ENCODE measurements at regions of chr19 and their contacts with region 1.

Region 1: GRCh38 chr19:53867225-53868090 is at the start of gene MYADM:
- DNase-seq: peak; percentile 95
- ATAC-seq: peak; percentile 70
- H3K4me3 ChIP-seq: peak within 1 kb of the TSS; percentile 95 to 96
- H3K27ac ChIP-seq: peak within 1 kb of the TSS; percentile 96
- H3K4me1 ChIP-seq: peaks cover 39% of the 10 kb centered on the region
- H3K27me3 ChIP-seq: no peaks in the 10 kb centered on the region
- CTCF ChIP-seq: no peak
- total RNA-seq, gene MYADM: 469 TPM

Region 2: DNA sequence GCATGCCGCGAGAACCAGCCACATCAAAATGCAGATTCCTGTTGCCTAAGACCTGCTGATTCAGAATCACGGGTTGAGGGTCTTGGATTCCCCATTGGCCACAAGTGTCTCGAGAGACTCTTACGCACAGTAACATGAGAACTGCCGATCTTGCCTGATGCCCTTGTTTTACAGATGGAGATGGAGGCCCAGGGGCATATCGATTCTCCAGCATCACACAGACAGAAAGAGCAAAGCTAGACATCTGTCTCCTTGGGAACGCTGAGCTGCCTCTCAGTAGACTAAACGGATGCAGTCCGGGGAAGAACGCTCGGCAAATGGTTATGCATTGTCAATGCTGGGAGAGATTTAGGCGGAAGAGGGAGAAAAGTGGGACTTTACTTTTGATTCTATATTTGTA is 48.7 kb before region 1 on chr19:
- CTCF ChIA-PET with region 1: no interaction called
- POLR2A ChIA-PET with region 1: no interaction called
- in situ Hi-C with region 1: no loop called
- intact Hi-C with region 1: no loop called
- DNase-seq: no peak
- ATAC-seq: no peak
- H3K4me3 ChIP-seq: no peak overlapping the region
- H3K27ac ChIP-seq: no peak overlapping the region
- H3K4me1 ChIP-seq: no peaks in the 10 kb centered on the region
- H3K27me3 ChIP-seq: no peaks in the 10 kb centered on the region
- CTCF ChIP-seq: no peak

Region 3: GRCh38 chr19:53881482-53882390 is 14.3 kb after region 1 on chr19 and contains the start of gene PRKCG:
- CTCF ChIA-PET with region 1: no interaction called
- POLR2A ChIA-PET with region 1: interaction called, 20 read pairs
- in situ Hi-C with region 1: no loop called
- intact Hi-C with region 1: no loop called
- DNase-seq: no peak
- ATAC-seq: peak; percentile 46
- H3K4me3 ChIP-seq: peak within 1 kb of the TSS; percentile 51 to 73
- H3K27ac ChIP-seq: peak within 1 kb of the TSS; percentile 78
- H3K4me1 ChIP-seq: peaks cover 31% of the 10 kb centered on the region
- H3K27me3 ChIP-seq: no peaks in the 10 kb centered on the region
- CTCF ChIP-seq: peak; percentile 84; the same call in 1 of the 2 replicates
- total RNA-seq, gene PRKCG: 2.5 TPM

Region 4: DNA sequence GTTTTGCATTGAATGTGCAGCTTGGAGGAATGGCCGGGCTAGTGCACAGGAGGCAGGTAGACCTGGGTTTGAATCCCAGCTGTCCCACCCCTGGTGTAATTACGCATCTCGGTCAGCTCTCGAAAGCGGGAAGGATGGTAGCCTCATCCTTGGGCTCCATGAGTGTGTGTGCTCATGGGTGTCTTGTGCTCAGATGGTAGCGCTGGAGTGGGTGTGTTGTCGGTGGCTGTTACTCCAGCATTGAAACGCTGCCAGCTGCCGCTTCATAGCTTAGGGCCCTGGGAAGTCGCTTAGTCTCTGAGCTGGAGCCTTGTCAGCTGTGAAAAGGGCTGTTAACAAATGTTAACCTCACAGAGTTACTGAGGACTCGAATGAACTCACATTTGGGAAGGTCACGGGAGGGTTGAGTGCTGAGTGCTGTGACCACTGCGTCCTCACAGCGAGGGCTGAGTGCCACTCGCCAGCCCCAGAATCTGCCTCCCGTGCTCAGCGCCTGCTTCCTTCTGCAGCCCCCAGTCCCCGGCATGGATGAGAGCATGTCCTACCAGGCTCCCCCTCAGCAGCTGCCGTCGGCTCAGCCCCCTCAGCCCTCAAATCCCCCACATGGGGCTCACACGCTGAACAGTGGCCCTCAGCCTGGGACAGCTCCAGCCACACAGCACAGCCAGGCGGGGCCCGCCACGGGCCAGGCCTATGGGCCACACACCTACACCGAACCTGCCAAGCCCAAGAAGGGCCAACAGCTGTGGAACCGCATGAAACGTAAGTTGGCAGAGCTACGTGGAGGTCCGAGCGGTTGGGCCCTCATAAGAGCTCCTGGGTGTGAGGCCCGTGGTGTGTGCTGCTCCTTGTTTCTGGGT is 586.7 kb after region 1 on chr19:
- CTCF ChIA-PET with region 1: no interaction called
- POLR2A ChIA-PET with region 1: interaction called, 10 read pairs
- in situ Hi-C with region 1: no loop called
- intact Hi-C with region 1: no loop called
- DNase-seq: no peak
- ATAC-seq: no peak
- H3K4me3 ChIP-seq: no peak overlapping the region
- H3K27ac ChIP-seq: no peak overlapping the region
- H3K4me1 ChIP-seq: peaks cover 12% of the 10 kb centered on the region
- H3K27me3 ChIP-seq: no peaks in the 10 kb centered on the region
- CTCF ChIP-seq: no peak

Region 5: GRCh38 chr19:54481322-54481930 is 614.0 kb after region 1 on chr19:
- CTCF ChIA-PET with region 1: no interaction called
- POLR2A ChIA-PET with region 1: no interaction called
- in situ Hi-C with region 1: no loop called
- intact Hi-C with region 1: no loop called
- DNase-seq: no peak
- ATAC-seq: peak; percentile 65
- H3K4me3 ChIP-seq: peak overlapping the region in 1 of 2 experiments; percentile 21; a peak in 1 of 4 replicates
- H3K27ac ChIP-seq: no peak overlapping the region
- H3K4me1 ChIP-seq: no peaks in the 10 kb centered on the region
- H3K27me3 ChIP-seq: no peaks in the 10 kb centered on the region
- CTCF ChIP-seq: peak; percentile 94

Measured in Panc1 (cell line).